Gastrocnemius medialis (tissue), 4 donors: ENCODE measurements at regions of chr17 and their contacts with region 1.

Region 1: GRCh38 chr17:50841949-50842354 is 6.6 kb downstream of the WFIKKN2 start:
- DNase-seq: peak; percentile 25 to 59
- ATAC-seq: peak; percentile 39 to 45
- H3K4me3 ChIP-seq: no peak overlapping the region
- H3K27ac ChIP-seq: no peak overlapping the region
- H3K4me1 ChIP-seq: peaks cover 18 to 19% of the 10 kb centered on the region in 2 donors
- H3K27me3 ChIP-seq: no peaks in the 10 kb centered on the region
- CTCF ChIP-seq: peak; percentile 77 to 85 (median 84)
- POLR2A ChIP-seq: no peak

Region 2: DNA sequence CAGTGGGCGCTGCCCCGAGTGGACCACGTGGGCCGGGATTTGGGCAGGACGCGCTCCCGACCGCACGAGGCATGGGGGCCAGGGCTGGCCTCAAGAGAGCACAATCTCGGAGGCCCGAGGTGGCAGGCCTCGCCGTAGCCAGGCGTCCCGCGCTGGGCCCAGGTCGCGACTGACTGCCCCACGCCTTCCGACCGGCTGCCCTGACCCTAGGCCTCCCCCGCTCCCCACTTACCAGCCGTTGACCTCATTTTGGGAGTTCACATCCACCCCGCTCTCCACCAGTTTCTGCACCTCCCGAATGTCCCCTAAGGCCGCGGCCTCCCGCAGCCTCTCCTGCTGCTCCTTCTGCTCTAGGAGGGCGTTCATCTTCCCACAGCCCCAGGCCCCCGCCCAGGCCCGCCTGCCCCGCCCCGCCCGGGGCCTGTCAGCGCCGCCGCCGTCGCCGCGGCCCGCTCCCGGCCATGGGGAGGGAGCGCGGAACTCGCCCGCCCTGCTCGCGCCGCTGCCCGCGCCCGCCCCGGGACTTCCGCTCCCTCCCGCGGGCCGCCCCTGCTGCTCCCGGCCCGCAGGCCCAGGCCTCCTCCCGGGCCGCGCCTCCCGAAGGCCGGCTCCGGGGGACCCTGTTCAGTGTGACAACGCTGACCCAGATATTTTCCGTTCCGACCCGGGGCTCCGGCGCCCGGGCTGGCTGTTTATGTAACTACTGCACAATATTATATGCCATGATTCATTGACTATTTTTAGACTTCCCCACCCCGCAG is 134.5 kb before region 1 on chr17 and contains the start of gene ANKRD40:
- in situ Hi-C with region 1: no loop called
- intact Hi-C with region 1: no loop called
- DNase-seq: peak; percentile 90 to 93
- ATAC-seq: peak; percentile 94 to 95
- H3K4me3 ChIP-seq: peak within 1 kb of the TSS; percentile 64 to 83 (median 76)
- H3K27ac ChIP-seq: peak within 1 kb of the TSS; percentile 90 to 97 (median 96)
- H3K4me1 ChIP-seq: peaks cover 42 to 43% of the 10 kb centered on the region in 2 donors
- H3K27me3 ChIP-seq: no peaks in the 10 kb centered on the region
- CTCF ChIP-seq: peak in 2 of 5 experiments; percentile 10 to 26
- POLR2A ChIP-seq: peak; percentile 87 to 88
- total RNA-seq, gene ANKRD40: 97.3 to 135 (median 112) TPM

Region 3: DNA sequence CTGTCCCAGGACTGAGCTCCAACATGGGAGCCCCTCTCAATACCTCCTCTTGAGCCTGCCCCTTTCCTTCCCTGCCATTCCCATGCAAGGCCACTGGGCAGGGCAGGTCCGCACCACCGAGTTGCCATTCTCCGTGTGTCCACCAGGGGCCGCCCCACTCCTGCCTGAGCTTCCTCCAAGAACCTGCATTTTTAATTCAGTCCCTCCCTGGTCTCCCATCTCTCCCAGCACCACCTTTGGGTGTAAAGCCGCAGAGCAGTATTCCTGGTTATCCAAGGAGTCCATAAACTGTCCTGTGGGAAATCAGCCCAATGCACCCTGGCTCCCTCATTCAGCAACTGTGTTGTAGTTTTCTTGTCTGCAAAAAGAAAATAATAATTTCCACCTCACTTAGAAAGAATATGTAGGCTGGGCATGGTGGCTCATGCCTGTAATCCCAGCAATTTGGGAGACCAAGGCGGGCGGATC is 58.7 kb before region 1 on chr17:
- in situ Hi-C with region 1: loop called (anchors 5 kb)
- intact Hi-C with region 1: loop called (anchors 1 kb)
- DNase-seq: peak; percentile 62 to 76
- ATAC-seq: peak; percentile 73 to 92
- H3K4me3 ChIP-seq: no peak overlapping the region
- H3K27ac ChIP-seq: no peak overlapping the region
- H3K4me1 ChIP-seq: no peaks in the 10 kb centered on the region
- H3K27me3 ChIP-seq: no peaks in the 10 kb centered on the region
- CTCF ChIP-seq: peak; percentile 95 to 99 (median 97)
- POLR2A ChIP-seq: no peak

Region 4: GRCh38 chr17:50816771-50817751 is 24.9 kb before region 1 on chr17:
- in situ Hi-C with region 1: no loop called
- intact Hi-C with region 1: loop called (anchors 1 kb)
- DNase-seq: peak in 1 of 2 donors; percentile 29
- ATAC-seq: peak; percentile 71 to 76
- H3K4me3 ChIP-seq: peak overlapping the region in 1 of 4 donors; percentile 34
- H3K27ac ChIP-seq: no peak overlapping the region
- H3K4me1 ChIP-seq: peaks cover 0 to 6% of the 10 kb centered on the region in 2 donors
- H3K27me3 ChIP-seq: no peaks in the 10 kb centered on the region
- CTCF ChIP-seq: peak; percentile 62 to 88 (median 80)
- POLR2A ChIP-seq: no peak

Region 5: GRCh38 chr17:50872710-50873424 is 30.9 kb after region 1 on chr17:
- in situ Hi-C with region 1: no loop called
- intact Hi-C with region 1: no loop called
- DNase-seq: peak; percentile 62 to 80
- ATAC-seq: peak; percentile 92 to 94
- H3K4me3 ChIP-seq: no peak overlapping the region
- H3K27ac ChIP-seq: peak overlapping the region; percentile 56 to 80 (median 78)
- H3K4me1 ChIP-seq: peaks cover 30 to 32% of the 10 kb centered on the region in 2 donors
- H3K27me3 ChIP-seq: no peaks in the 10 kb centered on the region
- CTCF ChIP-seq: no peak
- POLR2A ChIP-seq: no peak